Naive thymus-derived CD4-positive, alpha-beta T cell (primary cell): ENCODE measurements at regions of chr1 and their contacts with region 1.

Region 1: GRCh38 chr1:227542143-227543120 is 20.9 kb upstream of the ZNF678 start:
- DNase-seq: peak; percentile 82 to 94 (median 90)
- ATAC-seq: peak; percentile 97
- H3K4me3 ChIP-seq: peak overlapping the region; percentile 55
- H3K4me3 Mint-ChIP-seq: peak overlapping the region; percentile 57 to 79 (median 67)
- H3K27ac ChIP-seq: peak overlapping the region; percentile 17
- H3K27ac Mint-ChIP-seq: peak overlapping the region in 7 of 9 donors; percentile 23 to 86 (median 56)
- H3K4me1 ChIP-seq: peaks cover 3 to 10% of the 10 kb centered on the region in 2 donors
- H3K4me1 Mint-ChIP-seq: peaks cover 0 to 7% (median 5%) of the 10 kb centered on the region in 7 donors
- H3K27me3 ChIP-seq: no peaks in the 10 kb centered on the region
- H3K27me3 Mint-ChIP-seq: peaks cover 0 to 6% (median 0%) of the 10 kb centered on the region in 5 donors

Region 2: DNA sequence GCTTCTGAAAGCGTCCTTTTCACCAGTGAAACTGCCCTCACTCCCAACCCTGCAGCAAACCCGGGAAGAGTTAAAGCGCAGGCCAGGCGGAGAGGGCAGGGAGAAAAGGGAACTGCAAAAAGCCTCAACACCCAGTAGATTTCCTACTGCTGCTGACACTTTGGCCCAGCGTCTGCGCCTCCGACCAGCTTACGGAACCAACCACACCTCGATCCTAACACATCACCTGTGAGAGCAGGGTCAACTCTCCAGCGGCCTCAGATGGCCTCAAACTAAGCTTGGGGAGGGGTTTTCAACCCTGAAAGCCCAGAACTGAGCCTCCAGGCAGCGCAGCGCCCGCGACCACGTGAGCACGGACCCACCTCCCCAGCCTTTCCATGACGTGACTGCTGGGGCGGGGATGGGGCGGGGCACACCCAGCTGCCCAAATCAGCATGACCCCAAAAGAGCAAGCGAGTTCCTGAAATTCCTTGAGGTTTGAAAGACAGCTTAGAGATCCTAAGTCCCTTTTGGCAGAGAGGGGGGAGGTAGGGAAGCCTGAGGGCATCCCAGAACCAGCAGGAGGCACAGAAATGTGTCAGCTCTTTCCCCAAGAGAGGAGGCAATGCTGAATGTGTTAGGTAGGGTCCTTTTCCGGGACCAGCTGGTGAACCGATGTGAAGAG is 862.4 kb before region 1 on chr1:
- CTCF ChIA-PET with region 1: no interaction called
- POLR2A ChIA-PET with region 1: no interaction called
- intact Hi-C with region 1: no loop called
- DNase-seq: peak; percentile 42 to 89 (median 75)
- ATAC-seq: peak; percentile 58
- H3K4me3 ChIP-seq: peak overlapping the region; percentile 40
- H3K4me3 Mint-ChIP-seq: peak overlapping the region; percentile 80 to 90 (median 82)
- H3K27ac ChIP-seq: peak overlapping the region; percentile 86
- H3K27ac Mint-ChIP-seq: peak overlapping the region; percentile 95 to 100 (median 99)
- H3K4me1 ChIP-seq: peaks cover 86 to 97% of the 10 kb centered on the region in 2 donors
- H3K4me1 Mint-ChIP-seq: peaks cover 83 to 100% (median 99%) of the 10 kb centered on the region in 7 donors
- H3K27me3 ChIP-seq: no peaks in the 10 kb centered on the region
- H3K27me3 Mint-ChIP-seq: peaks cover 0 to under 1% (median 0%) of the 10 kb centered on the region in 5 donors

Region 3: DNA sequence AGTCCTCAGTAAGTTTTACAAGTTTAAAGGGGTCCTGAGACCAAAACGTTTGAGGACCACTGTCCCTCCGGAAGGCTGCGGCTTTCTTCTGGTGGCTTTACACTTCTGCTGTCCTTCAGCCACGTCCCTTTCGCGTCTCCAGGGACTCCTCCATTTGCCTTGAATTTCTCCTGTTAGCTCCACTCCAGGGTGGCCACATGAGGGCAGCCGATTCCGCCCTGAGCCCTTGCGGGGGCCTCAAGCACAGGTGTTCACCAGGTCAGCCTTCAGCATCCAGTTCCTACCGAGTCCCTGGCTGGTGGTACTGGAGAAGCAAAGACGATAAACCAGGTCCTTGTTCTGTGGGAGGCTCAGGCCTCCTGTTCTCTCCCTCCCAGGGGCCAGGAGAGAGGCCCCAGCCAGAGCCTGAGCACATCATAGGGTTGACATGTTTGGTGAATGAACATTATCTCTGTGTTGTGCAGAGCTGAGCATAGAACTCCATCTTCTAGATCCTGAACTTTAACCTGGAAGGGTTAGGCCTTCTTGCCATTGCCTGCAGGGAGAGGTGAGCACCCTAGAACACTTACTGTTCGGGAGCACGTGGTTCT is 629.8 kb before region 1 on chr1:
- CTCF ChIA-PET with region 1: no interaction called
- POLR2A ChIA-PET with region 1: no interaction called
- intact Hi-C with region 1: loop called in 1 of 2 experiments (anchors 1 kb)
- DNase-seq: peak in 7 of 9 donors; percentile 16 to 43 (median 29)
- ATAC-seq: peak; percentile 67
- H3K4me3 ChIP-seq: no peak overlapping the region
- H3K4me3 Mint-ChIP-seq: peak overlapping the region in 1 of 10 donors; percentile 10
- H3K27ac ChIP-seq: no peak overlapping the region
- H3K27ac Mint-ChIP-seq: peak overlapping the region in 2 of 9 donors; percentile 28 to 64
- H3K4me1 ChIP-seq: no peaks in the 10 kb centered on the region
- H3K4me1 Mint-ChIP-seq: peaks cover 0 to 18% (median 0%) of the 10 kb centered on the region in 7 donors
- H3K27me3 ChIP-seq: no peaks in the 10 kb centered on the region
- H3K27me3 Mint-ChIP-seq: no peaks in the 10 kb centered on the region

Region 4: GRCh38 chr1:227318003-227318852 is 224.2 kb before region 1 on chr1 and contains the start of gene CDC42BPA:
- CTCF ChIA-PET with region 1: no interaction called
- POLR2A ChIA-PET with region 1: no interaction called
- intact Hi-C with region 1: no loop called
- DNase-seq: peak in 8 of 9 donors; percentile 16 to 42 (median 22)
- ATAC-seq: peak; percentile 75
- H3K4me3 ChIP-seq: peak within 1 kb of the TSS; percentile 36
- H3K4me3 Mint-ChIP-seq: peak within 1 kb of the TSS; percentile 74 to 85 (median 82)
- H3K27ac ChIP-seq: no peak within 1 kb of the TSS
- H3K27ac Mint-ChIP-seq: peak within 1 kb of the TSS in 1 of 9 donors; percentile 33
- H3K4me1 ChIP-seq: peaks cover 0 to 4% of the 10 kb centered on the region in 2 donors
- H3K4me1 Mint-ChIP-seq: peaks cover 5 to 12% (median 8%) of the 10 kb centered on the region in 7 donors
- H3K27me3 ChIP-seq: peaks cover 3 to 5% of the 10 kb centered on the region in 2 donors
- H3K27me3 Mint-ChIP-seq: peaks cover 58 to 80% (median 69%) of the 10 kb centered on the region in 5 donors
- total RNA-seq, gene CDC42BPA: 0.78 to 2.0 (median 1.4) TPM

Region 5: DNA sequence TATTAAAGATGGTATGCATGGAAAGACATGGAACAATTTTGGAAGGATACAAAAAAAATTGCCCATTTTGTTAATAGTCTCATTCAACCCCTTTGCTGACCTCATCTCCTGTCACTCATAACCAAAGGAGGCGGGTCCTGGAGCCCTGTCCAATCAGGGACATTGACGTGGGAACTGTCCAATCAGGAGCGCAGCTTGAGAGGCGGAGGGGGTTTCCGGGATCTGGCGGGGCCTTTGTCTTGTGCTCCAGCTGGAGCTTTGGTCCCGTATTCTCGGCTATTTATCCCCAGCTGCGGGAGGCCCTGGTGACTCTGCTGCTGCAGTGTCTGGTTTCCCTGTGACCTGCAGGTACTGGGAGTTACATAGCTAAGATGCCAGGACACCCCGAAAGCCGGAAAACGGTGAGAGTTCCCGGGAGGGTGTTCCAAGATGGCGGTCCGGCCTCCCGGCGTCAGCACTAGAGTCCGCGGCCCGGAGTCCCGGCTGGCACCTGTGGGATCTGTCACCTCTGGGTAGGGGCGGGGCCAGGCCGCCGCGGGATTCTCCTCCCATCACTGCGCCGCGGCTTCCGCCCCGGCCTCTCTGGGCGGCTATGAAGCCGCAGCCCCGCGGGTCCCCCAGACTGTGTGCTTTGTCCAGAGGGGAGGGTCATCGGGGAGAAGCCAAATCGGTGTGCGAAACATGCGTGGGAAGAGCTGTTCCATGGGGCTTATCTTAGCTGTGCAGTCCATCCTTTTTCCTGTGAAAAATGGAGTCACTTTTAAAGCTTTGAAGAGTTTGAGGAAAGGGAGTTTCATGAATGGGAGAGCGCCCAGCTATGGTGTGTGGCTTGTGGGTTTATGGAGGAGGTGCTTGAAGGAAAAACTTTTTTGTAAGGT is 21.1 kb after region 1 on chr1 and contains the start of gene ZNF678:
- CTCF ChIA-PET with region 1: interaction called, 5 read pairs
- POLR2A ChIA-PET with region 1: interaction called, 10 read pairs
- intact Hi-C with region 1: loop called (anchors 1 kb)
- DNase-seq: peak; percentile 58 to 86 (median 84)
- ATAC-seq: peak; percentile 95
- H3K4me3 ChIP-seq: peak within 1 kb of the TSS; percentile 88
- H3K4me3 Mint-ChIP-seq: peak within 1 kb of the TSS; percentile 87 to 97 (median 94)
- H3K27ac ChIP-seq: peak within 1 kb of the TSS; percentile 82
- H3K27ac Mint-ChIP-seq: peak within 1 kb of the TSS; percentile 71 to 95 (median 91)
- H3K4me1 ChIP-seq: peaks cover 4 to 5% of the 10 kb centered on the region in 2 donors
- H3K4me1 Mint-ChIP-seq: peaks cover 17 to 57% (median 40%) of the 10 kb centered on the region in 7 donors
- H3K27me3 ChIP-seq: no peaks in the 10 kb centered on the region
- H3K27me3 Mint-ChIP-seq: peaks cover 22 to 27% (median 27%) of the 10 kb centered on the region in 5 donors
- total RNA-seq, gene ZNF678: 3.2 to 8.3 (median 7.4) TPM

Region 6: GRCh38 chr1:227734856-227735538 is 192.6 kb after region 1 on chr1 and contains the starts of genes JMJD4 and SNAP47:
- CTCF ChIA-PET with region 1: no interaction called
- POLR2A ChIA-PET with region 1: no interaction called
- intact Hi-C with region 1: loop called (anchors 1 to 2 kb)
- DNase-seq: peak; percentile 85 to 98 (median 93)
- ATAC-seq: peak; percentile 94
- H3K4me3 ChIP-seq: peak within 1 kb of the TSS; percentile 72
- H3K4me3 Mint-ChIP-seq: peak within 1 kb of the TSS; percentile 87 to 97 (median 90)
- H3K27ac ChIP-seq: peak within 1 kb of the TSS; percentile 87
- H3K27ac Mint-ChIP-seq: peak within 1 kb of the TSS; percentile 62 to 96 (median 89)
- H3K4me1 ChIP-seq: peaks cover 3 to 16% of the 10 kb centered on the region in 2 donors
- H3K4me1 Mint-ChIP-seq: peaks cover 28 to 59% (median 40%) of the 10 kb centered on the region in 7 donors
- H3K27me3 ChIP-seq: no peaks in the 10 kb centered on the region
- H3K27me3 Mint-ChIP-seq: no peaks in the 10 kb centered on the region
- total RNA-seq, gene JMJD4: 12.1 to 36.8 (median 26.3) TPM
- total RNA-seq, gene SNAP47: 18.5 to 31.8 (median 27.8) TPM